SK-N-SH (cell line): ENCODE measurements at regions of chr17 and their contacts with region 1.

Region 1: DNA sequence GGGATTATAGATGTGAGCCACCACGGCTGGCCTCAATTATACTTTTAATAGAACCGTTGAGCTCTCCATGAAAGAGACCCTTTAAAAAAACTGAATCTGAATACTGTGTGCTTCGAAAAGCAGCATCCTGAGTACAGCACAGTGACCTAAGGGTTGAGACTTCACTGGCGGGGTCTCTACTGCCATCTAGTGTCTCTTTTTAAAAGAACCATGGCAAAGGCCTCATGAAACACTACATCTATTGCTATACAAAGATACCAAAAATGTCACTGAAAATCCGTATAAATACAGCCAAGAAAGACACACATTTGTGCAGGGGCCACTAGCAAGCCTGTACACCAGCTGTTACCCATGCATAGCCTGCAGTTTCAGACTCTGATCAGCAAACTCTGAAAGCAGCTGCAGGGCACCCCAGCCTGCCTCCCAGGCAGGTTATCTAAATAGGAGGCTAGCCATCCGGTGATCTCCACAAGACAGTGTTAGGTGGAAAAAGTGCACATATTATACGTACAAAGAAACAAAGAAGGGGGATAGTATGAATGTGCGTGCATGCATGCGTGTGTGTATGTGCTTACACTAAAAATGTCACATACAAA is 35.3 kb downstream of the NPLOC4 start:
- DNase-seq: peak; percentile 87
- H3K4me3 ChIP-seq: no peak overlapping the region
- H3K27ac ChIP-seq: peak overlapping the region in 1 of 2 experiments; percentile 31; a peak in 1 of 4 replicates
- H3K4me1 ChIP-seq: peaks cover 2 to 20% of the 10 kb centered on the region in 2 experiments
- H3K27me3 ChIP-seq: no peaks in the 10 kb centered on the region
- CTCF ChIP-seq: peak; percentile 98
- EP300 ChIP-seq: no peak
- RAD21 ChIP-seq: peak; percentile 92

Region 2: DNA sequence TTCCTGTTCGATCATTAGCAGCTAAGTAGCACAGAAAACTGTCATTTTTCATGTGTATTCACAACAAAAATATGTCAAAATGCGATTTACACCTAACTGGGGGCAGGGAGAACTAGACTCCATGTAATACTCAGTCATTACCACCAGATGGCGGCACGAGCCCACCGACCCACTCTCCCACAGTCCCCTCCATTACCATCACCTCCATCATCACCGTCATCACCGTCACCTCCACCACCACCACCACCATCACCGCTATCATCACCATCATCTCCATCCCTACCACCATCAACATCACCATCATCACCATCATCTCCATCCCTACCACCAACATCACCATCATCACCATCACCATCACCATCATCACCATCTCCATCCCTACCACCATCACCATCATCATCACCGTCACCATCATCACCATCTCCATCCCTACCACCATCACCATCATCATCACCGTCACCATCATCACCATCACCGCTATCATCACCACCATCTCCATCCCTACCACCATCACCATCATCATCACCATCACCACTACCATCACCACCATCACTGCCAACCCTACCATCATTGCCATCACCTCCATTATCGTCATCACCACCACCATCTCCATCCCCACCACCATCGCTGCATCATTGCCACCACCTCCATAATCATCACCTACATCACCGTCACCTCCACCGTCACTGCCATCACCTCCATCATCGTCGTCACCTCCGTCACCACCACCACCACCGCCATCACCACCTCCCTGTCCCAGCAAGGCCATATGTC is 348.1 kb before region 1 on chr17:
- CTCF ChIA-PET with region 1: interaction called, 12 read pairs
- POLR2A ChIA-PET with region 1: no interaction called
- DNase-seq: peak; percentile 92
- H3K4me3 ChIP-seq: peak overlapping the region in 1 of 2 experiments; percentile 21; a peak in 1 of 4 replicates
- H3K27ac ChIP-seq: no peak overlapping the region; a peak in 1 of 4 replicates
- H3K4me1 ChIP-seq: peaks cover 0 to 38% of the 10 kb centered on the region in 2 experiments; a peak in 1 of 4 replicates
- H3K27me3 ChIP-seq: no peaks in the 10 kb centered on the region
- CTCF ChIP-seq: peak; percentile 92
- EP300 ChIP-seq: no peak
- RAD21 ChIP-seq: peak; percentile 99

Region 3: GRCh38 chr17:81566461-81567126 is 35.0 kb before region 1 on chr17:
- CTCF ChIA-PET with region 1: interaction called, 27 read pairs
- POLR2A ChIA-PET with region 1: no interaction called
- DNase-seq: peak; percentile 70
- H3K4me3 ChIP-seq: peak overlapping the region in 1 of 2 experiments; percentile 41; a peak in 3 of 4 replicates
- H3K27ac ChIP-seq: peak overlapping the region; percentile 84 to 93
- H3K4me1 ChIP-seq: peaks cover 22 to 33% of the 10 kb centered on the region in 2 experiments
- H3K27me3 ChIP-seq: no peaks in the 10 kb centered on the region
- CTCF ChIP-seq: no peak
- EP300 ChIP-seq: peak; percentile 41 to 96; a peak in 3 of 4 replicates
- RAD21 ChIP-seq: peak; percentile 24; the same call in 1 of the 2 replicates

Region 4: GRCh38 chr17:81583589-81584342 is 17.9 kb before region 1 on chr17:
- CTCF ChIA-PET with region 1: interaction called, 36 read pairs
- POLR2A ChIA-PET with region 1: no interaction called
- DNase-seq: no peak
- H3K4me3 ChIP-seq: no peak overlapping the region
- H3K27ac ChIP-seq: no peak overlapping the region
- H3K4me1 ChIP-seq: peaks cover 0 to 18% of the 10 kb centered on the region in 2 experiments; a peak in 2 of 4 replicates
- H3K27me3 ChIP-seq: no peaks in the 10 kb centered on the region
- CTCF ChIP-seq: no peak
- EP300 ChIP-seq: no peak
- RAD21 ChIP-seq: no peak

Region 5: DNA sequence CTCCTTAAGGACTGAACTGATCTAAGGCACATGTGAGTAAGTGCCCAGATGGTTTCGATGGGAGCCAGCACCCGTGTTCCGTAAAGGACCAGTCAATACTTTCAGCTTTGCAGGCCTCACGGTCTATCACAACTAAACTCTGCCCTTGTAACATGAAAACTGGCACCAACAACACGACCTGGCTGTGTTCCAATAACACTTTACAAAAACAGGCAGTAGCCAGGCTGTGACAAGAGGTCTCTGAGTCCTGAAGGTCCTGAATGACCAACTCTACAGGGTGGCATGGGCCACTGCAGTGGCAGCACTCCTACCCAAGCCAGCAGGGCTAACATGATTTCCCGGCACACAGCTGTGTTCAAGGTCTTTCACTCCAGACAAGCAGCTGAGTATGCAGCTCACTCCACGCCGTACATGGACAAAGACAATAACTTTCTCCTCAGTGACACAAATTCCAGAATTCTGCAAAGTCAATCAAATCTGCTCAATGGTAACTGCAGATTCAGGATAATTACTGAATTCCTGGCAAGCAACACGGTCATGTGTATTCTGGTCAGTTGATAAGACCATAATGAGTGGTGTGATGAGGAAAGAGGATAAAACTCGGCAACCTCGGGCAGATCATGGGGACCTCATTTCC is 20.0 kb after region 1 on chr17:
- CTCF ChIA-PET with region 1: interaction called, 55 read pairs
- POLR2A ChIA-PET with region 1: interaction called, 5 read pairs
- DNase-seq: no peak
- H3K4me3 ChIP-seq: no peak overlapping the region
- H3K27ac ChIP-seq: peak overlapping the region in 1 of 2 experiments; percentile 4; a peak in 2 of 4 replicates
- H3K4me1 ChIP-seq: peaks cover 0 to 6% of the 10 kb centered on the region in 2 experiments; a peak in 1 of 4 replicates
- H3K27me3 ChIP-seq: no peaks in the 10 kb centered on the region
- CTCF ChIP-seq: no peak
- EP300 ChIP-seq: no peak
- RAD21 ChIP-seq: no peak